SK-N-SH (cell line): ENCODE measurements at regions of chr1 and their contacts with region 1.

Region 1: DNA sequence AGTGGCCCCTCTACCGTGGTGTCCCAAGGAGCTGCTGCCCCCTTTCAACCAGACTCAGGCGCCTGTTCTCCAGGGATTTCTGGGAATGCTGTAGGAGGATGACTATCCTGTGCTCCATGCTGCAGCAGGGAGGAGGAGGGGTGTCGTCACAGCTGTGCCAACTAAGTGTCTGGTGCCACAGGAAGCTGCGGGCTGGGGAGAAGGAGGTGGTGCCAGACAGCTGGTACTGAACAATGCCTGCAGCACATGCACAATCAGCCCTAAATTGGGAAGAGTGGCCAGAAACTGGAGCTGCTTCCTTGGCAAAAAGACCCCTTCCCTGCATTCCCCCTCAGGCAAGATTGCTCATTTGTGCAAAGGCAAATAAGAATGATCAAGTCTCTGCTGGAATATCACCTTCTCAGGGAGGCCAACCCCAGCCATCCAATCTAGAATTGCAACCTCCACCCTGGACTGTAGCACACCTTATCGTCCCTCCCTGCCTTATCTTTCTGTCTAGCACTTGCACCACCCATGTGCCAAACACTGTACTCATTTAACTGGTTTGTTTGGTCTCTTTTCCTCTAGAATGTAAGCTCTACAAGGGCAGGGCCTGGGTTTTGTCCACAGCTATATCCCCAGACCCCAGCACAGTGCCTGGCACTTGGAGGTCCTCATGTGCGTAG is 33.3 kb downstream of the LAMB3 start:
- DNase-seq: peak; percentile 53
- H3K4me3 ChIP-seq: no peak overlapping the region
- H3K27ac ChIP-seq: no peak overlapping the region
- H3K4me1 ChIP-seq: peaks cover 9 to 31% of the 10 kb centered on the region in 2 experiments; a peak in 2 of 4 replicates
- H3K27me3 ChIP-seq: no peaks in the 10 kb centered on the region
- CTCF ChIP-seq: no peak
- EP300 ChIP-seq: no peak
- RAD21 ChIP-seq: no peak

Region 2: DNA sequence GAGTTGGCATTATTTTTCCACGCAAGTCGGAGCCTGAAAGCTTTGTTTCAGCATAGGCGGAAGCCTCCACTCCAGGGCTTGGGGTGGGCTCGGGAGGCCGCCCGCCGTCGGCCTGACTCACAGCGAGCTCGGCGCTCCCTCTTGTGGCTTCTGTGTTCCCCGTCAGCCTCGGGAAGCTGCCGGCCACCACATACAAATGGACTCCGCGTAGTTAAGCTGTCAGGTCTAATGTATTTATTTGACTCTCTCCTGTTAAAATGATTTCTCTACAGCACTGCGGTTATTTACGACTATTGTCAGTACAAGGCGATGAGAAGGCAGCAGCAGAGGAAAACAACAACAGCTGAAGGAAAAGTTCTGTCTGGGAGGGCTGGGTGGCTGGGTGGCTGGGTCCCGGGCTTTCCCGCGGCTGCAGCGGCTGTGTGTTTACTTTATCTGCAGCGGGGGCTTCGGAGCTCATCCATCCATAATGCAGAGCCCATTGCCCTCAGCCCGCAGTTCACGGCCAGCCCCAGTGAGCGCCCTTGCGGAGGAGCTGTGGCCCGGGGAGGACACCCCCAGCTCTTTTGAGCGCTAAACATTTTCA is 411.1 kb before region 1 on chr1:
- CTCF ChIA-PET with region 1: no interaction called
- POLR2A ChIA-PET with region 1: no interaction called
- DNase-seq: peak; percentile 87
- H3K4me3 ChIP-seq: peak overlapping the region; percentile 38 to 49
- H3K27ac ChIP-seq: peak overlapping the region in 1 of 2 experiments; percentile 71; a peak in 2 of 4 replicates
- H3K4me1 ChIP-seq: peaks cover 0 to 23% of the 10 kb centered on the region in 2 experiments; a peak in 3 of 4 replicates
- H3K27me3 ChIP-seq: no peaks in the 10 kb centered on the region
- CTCF ChIP-seq: peak; percentile 87
- EP300 ChIP-seq: no peak
- RAD21 ChIP-seq: peak; percentile 92

Region 3: DNA sequence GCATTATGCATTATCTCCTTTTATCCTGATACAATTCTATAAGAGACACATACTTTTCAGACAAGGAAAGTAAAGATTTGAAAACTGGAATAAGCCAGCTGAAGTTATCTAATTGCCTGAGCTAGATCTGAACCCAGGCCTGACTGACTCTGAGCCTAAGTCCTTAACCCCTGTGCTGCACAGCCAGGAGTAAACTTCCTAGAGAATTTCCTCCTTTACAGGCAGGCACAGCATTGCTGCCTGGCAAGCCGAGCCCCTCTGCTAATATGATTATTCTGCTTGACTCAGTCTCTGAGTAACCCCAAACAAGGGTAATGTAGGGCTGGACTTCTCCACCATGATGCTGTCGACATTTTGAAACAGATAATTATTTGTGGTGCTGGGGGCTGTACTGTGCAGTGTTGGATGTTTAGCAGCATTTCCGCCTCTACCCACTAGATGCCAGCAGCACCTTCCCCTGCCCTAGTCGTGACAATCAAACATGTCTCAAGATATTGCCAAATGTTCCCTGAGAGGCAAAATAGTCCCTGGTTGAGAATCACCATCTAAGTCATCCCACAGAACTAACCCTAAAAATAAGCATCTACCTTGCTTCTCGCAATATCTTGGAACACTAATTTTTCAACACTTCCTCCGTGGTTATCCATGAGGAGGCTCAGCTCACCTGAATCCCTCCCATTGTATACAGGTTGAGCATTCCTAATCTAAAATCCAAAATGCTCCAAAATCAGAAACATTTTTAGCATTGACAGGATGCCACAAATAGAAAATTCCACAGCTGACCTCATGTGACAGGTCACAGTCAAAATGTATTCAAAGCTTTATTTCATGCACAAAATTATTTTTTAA is 16.9 kb before region 1 on chr1:
- CTCF ChIA-PET with region 1: interaction called, 43 read pairs
- POLR2A ChIA-PET with region 1: no interaction called
- DNase-seq: peak; percentile 55
- H3K4me3 ChIP-seq: peak overlapping the region in 1 of 2 experiments; percentile 18; a peak in 1 of 4 replicates
- H3K27ac ChIP-seq: peak overlapping the region in 1 of 2 experiments; percentile 79; a peak in 1 of 4 replicates
- H3K4me1 ChIP-seq: peaks cover 0 to 27% of the 10 kb centered on the region in 2 experiments; a peak in 3 of 4 replicates
- H3K27me3 ChIP-seq: no peaks in the 10 kb centered on the region
- CTCF ChIP-seq: peak; percentile 71
- EP300 ChIP-seq: no peak
- RAD21 ChIP-seq: peak; percentile 77